Left colon (tissue), 2 donors: ENCODE measurements at regions of chr4 and their contacts with region 1.

Region 1: GRCh38 chr4:22268350-22269025 is 247.4 kb downstream of the ADGRA3 start:
- DNase-seq: no peak
- ATAC-seq: no peak

Region 2: DNA sequence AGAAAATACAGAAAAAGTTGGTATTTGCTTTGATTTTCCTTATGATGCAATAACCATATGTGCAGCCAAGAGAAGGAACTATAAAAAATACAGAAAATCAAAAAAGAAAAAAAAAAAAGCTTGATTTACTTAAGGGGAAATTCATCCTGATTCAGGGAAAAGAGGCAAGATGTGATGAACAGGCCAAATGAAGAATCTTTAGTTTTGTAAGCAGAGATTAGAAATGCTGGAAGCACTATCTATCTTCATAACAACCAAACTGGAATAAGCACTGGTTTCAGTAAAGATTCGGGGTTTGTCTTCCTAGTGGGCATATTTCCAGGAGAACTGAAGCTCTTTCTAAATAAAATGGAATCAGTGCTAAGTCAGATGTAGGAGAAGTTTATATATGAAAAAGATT is 237.1 kb before region 1 on chr4:
- intact Hi-C with region 1: no loop called
- DNase-seq: no peak
- ATAC-seq: no peak

Region 3: GRCh38 chr4:22202246-22202974 is 66.1 kb before region 1 on chr4:
- intact Hi-C with region 1: loop called in 1 of 2 experiments (anchors 2 kb)
- DNase-seq: peak; percentile 5 to 28
- ATAC-seq: peak; percentile 97

Region 4: GRCh38 chr4:22407361-22407760 is 138.9 kb after region 1 on chr4:
- intact Hi-C with region 1: no loop called
- DNase-seq: no peak
- ATAC-seq: no peak

Region 5: DNA sequence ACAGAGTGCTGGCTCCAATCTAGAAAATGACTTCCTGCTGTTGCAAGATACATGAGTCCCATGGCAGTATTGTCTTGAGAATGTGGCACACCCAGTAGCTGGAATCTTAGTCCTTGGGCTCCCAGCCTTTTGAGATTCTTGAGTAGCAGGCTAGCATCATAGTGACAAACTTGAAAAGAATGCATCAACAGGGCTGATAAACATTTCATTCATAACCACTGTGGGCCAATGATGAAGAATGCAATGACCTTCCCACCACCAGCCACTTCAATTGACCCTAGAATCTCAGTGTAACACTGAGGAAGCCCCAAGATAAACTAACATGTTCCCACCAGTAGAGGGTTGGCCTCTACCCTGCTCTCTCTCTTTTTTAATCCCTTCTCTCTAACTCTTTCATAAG is 753.5 kb after region 1 on chr4:
- intact Hi-C with region 1: no loop called
- DNase-seq: no peak
- ATAC-seq: no peak